Endothelial cell of umbilical vein (primary cell): ENCODE measurements at regions of chr17 and their contacts with region 1.

Region 1: DNA sequence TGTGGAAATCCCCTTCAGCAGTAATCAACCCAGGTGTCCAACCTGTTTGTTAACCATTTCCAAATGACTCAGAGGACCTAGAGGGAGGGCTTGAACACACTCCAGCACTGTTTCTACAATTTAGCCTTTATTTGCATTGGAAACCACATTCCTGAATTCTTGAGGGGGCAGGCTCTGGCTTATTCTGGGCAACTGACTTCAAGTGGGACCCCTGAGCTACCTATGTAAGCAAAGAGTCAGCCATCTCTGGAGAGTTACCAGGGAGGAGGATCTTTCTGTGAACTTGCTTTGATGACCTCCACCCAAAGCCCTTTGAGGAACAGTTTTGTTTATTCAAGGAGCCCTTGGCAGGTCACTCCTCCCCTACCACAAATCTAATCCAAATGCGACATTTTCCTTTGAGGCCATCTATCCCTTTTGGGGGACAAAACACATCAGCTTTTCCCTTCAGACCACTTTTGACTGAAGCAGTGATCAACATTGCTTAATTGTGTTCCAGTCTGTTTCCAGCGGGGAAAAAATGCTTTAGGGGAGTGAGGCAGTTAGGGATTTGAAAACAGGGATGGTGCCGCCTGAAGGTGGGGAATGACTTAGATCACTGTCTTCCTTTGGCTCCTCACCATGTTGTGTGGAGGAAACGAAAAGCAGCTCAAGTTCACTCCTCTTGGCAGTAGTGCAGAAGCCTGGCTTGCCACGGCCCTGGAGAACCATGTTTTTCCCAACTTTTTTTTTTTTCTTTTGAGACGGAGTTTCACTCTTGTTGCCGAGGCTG is 46.2 kb downstream of the TUBD1 start:
- DNase-seq: peak; percentile 74
- H3K4me3 ChIP-seq: no peak overlapping the region
- H3K27ac ChIP-seq: peak overlapping the region; percentile 10
- H3K4me1 ChIP-seq: peaks cover 10% of the 10 kb centered on the region
- H3K27me3 ChIP-seq: no peaks in the 10 kb centered on the region
- CTCF ChIP-seq: no peak
- POLR2A ChIP-seq: no peak

Region 2: DNA sequence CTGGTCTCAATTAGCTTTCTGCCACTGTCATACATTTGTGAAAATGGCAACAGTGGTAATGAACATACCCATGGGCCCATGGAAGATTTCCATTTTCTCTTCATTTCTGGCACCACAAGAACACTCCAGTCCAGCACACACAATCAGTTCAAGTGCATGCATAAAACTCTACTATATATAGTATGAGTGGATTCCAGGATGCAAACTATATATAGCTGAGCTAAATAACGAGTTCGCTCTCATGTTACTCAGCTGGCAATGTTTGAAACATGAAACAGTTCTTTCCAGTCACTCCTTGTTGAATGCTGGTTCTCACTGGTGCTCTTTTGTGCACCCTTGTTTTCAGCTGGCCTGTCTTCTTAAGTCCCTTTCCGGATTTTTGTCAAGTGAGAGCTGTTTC is 356.4 kb before region 1 on chr17:
- CTCF ChIA-PET with region 1: no interaction called
- POLR2A ChIA-PET with region 1: no interaction called
- dilution Hi-C with region 1: no loop called
- intact Hi-C with region 1: no loop called
- DNase-seq: no peak
- H3K4me3 ChIP-seq: no peak overlapping the region
- H3K27ac ChIP-seq: no peak overlapping the region
- H3K4me1 ChIP-seq: no peaks in the 10 kb centered on the region
- H3K27me3 ChIP-seq: peaks cover 3 to 5% of the 10 kb centered on the region in 2 experiments
- CTCF ChIP-seq: no peak
- POLR2A ChIP-seq: no peak

Region 3: GRCh38 chr17:59746849-59747445 is 99.6 kb before region 1 on chr17:
- CTCF ChIA-PET with region 1: interaction called, 110 read pairs
- POLR2A ChIA-PET with region 1: interaction called, 224 read pairs
- dilution Hi-C with region 1: no loop called
- intact Hi-C with region 1: no loop called
- DNase-seq: peak; percentile 68
- H3K4me3 ChIP-seq: no peak overlapping the region
- H3K27ac ChIP-seq: no peak overlapping the region
- H3K4me1 ChIP-seq: no peaks in the 10 kb centered on the region
- H3K27me3 ChIP-seq: no peaks in the 10 kb centered on the region
- CTCF ChIP-seq: peak; percentile 30 to 43
- POLR2A ChIP-seq: no peak

Region 4: DNA sequence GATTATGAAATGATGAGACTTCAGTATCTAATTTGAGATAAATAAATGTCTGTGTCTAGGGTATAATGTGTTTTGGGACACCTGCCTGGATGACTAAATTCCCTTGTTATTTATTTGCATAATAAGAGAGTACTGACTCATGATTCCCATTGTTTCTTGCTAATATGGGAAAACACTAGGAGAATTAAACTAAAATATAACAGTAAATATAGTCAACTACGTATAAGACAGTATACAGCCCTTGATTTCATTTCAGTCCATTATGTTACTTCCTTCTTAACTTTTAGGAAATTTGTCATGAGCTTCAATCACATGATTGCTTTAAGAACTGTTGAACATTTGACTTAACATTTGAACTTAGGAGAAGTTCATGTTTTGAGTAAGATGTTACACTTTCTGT is 76.7 kb before region 1 on chr17:
- CTCF ChIA-PET with region 1: no interaction called
- POLR2A ChIA-PET with region 1: interaction called, 10 read pairs
- dilution Hi-C with region 1: no loop called
- intact Hi-C with region 1: no loop called
- DNase-seq: peak; percentile 89
- H3K4me3 ChIP-seq: peak overlapping the region in 1 of 3 experiments; percentile 11
- H3K27ac ChIP-seq: peak overlapping the region; percentile 98
- H3K4me1 ChIP-seq: peaks cover 53% of the 10 kb centered on the region
- H3K27me3 ChIP-seq: no peaks in the 10 kb centered on the region
- CTCF ChIP-seq: no peak
- POLR2A ChIP-seq: no peak

Region 5: DNA sequence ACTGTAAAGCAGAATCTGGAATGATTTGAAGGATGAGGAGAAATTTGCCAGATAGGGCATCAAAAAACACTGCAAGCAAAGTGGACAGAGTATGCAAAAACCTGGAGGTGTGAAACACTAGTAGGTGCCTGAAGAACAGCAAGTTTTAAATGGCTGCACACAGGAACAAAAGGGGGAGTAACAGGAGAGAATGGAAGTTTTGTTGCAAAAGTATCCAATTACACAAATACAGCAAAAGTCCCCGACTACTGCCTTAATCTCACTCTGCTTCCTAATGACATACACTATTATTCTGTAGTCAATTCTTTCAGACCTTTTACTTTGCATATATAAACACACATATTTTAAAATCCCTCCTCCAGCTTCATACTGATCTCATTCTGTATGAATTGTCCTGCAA is 230.6 kb after region 1 on chr17:
- CTCF ChIA-PET with region 1: no interaction called
- POLR2A ChIA-PET with region 1: no interaction called
- dilution Hi-C with region 1: no loop called
- intact Hi-C with region 1: no loop called
- DNase-seq: no peak
- H3K4me3 ChIP-seq: peak overlapping the region in 1 of 3 experiments; percentile 6
- H3K27ac ChIP-seq: no peak overlapping the region
- H3K4me1 ChIP-seq: peaks cover 14% of the 10 kb centered on the region
- H3K27me3 ChIP-seq: no peaks in the 10 kb centered on the region
- CTCF ChIP-seq: no peak
- POLR2A ChIP-seq: no peak